Activated naive CD4-positive, alpha-beta T cell treated with anti-CD3 and anti-CD28 coated beads for 36 hours (primary cell): ENCODE measurements at regions of chr17 and their contacts with region 1.

Region 1: DNA sequence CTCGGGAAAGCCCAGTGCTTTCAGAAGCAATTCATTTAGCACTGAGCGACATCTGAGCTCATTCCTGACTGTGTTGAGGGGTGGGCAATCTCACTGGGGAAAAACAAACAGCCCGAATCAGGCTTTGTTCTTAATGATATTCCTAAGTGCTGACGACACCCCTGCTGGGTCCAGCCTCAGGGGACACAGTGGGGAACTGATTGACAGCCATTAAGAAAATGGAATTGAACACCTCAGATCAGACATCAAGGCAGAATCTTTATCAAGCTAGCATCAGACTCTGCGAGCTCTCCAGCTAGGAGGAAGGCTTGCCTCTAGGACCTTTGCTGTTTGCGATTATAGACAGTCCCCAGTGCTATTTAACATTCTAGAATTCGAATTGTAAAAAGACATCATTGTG is 22.5 kb upstream of the LYRM9 start:
- DNase-seq: no peak
- H3K4me3 Mint-ChIP-seq: no peak overlapping the region
- H3K27ac Mint-ChIP-seq: no peak overlapping the region
- H3K4me1 Mint-ChIP-seq: no peaks in the 10 kb centered on the region
- H3K27me3 Mint-ChIP-seq: peaks cover 2% of the 10 kb centered on the region

Region 2: DNA sequence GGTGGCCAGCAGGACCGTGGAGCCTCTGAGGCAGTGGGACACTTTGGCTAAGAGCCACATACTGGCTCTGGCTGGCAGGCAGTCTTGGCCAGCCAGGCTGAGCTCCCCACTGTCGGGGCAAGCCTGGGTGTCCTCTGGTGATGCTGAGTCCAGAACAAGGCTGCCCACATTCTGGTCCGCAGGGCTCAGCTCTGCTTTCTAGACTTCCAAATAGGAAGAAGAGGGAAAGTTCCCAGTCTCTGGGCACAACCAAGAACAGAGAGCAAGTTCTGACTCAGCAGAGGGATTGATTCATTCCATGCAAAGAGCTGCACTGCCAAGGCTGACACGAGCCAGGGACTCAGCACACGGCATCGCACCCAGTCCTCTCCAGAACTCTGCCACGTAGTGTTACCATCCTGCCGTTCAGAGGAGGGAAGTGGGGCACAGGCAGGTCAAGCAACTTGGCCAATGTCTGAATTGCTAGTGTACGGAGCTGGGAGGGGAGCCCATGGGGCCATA is 174.3 kb before region 1 on chr17:
- CTCF ChIA-PET with region 1: no interaction called
- intact Hi-C with region 1: no loop called
- DNase-seq: no peak
- H3K4me3 Mint-ChIP-seq: no peak overlapping the region
- H3K27ac Mint-ChIP-seq: no peak overlapping the region
- H3K4me1 Mint-ChIP-seq: no peaks in the 10 kb centered on the region
- H3K27me3 Mint-ChIP-seq: no peaks in the 10 kb centered on the region

Region 3: DNA sequence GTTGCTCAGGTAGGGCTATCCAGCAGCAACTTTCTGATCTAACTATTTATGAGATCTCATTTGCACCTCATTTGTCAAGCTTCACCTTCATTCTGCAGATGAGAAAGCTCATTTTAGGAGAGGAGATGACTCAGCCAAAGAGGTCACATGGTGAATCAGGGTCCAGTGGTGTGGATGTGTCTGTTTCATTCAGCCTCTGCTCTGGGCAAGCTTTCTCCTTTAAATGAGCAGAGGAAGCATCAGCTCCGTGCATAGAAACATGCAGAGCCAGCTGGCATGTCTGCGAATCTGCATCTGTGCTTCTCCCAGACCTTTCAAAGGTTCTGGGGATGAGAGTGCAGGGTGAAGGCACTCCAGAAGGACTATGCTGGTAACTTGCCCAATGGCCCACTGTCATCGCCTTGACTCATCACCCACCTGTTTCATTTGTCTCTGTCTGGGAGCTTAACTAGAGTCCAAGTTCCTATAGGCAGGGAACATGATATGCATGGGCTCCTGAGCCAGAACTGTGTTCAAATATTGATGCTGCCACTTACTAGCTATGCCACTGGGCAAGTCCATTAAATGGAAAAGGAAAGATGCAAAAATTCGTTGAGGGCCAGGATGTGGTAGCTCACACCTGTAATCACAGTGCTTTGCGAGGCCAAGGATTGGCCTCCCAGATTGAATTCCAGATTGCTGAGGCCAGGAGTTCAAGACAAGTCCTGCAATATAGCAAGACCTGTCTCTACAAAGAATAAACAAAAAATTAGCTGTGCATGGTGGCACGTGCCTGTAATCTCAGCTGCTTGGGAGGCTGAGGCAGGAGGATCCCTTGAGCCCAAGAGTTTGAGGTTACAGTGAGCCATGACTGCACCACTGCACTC is 59.7 kb after region 1 on chr17:
- CTCF ChIA-PET with region 1: no interaction called
- intact Hi-C with region 1: loop called (anchors 10 kb)
- DNase-seq: no peak
- H3K4me3 Mint-ChIP-seq: no peak overlapping the region
- H3K27ac Mint-ChIP-seq: no peak overlapping the region
- H3K4me1 Mint-ChIP-seq: no peaks in the 10 kb centered on the region
- H3K27me3 Mint-ChIP-seq: no peaks in the 10 kb centered on the region